Activated T-helper 2 cell treated with anti-CD3 and anti-CD28 coated beads, Interferon-gamma antibody, Interleukin-2, Interleukin-4, amounts not matched to agents 10 μg/mL and 5 μg/mL and 100 μg/mL, durations not matched to agents 14 hours and 24 hours and 36 hours (primary cell): ENCODE measurements at regions of chr2 and their contacts with region 1.

Region 1: DNA sequence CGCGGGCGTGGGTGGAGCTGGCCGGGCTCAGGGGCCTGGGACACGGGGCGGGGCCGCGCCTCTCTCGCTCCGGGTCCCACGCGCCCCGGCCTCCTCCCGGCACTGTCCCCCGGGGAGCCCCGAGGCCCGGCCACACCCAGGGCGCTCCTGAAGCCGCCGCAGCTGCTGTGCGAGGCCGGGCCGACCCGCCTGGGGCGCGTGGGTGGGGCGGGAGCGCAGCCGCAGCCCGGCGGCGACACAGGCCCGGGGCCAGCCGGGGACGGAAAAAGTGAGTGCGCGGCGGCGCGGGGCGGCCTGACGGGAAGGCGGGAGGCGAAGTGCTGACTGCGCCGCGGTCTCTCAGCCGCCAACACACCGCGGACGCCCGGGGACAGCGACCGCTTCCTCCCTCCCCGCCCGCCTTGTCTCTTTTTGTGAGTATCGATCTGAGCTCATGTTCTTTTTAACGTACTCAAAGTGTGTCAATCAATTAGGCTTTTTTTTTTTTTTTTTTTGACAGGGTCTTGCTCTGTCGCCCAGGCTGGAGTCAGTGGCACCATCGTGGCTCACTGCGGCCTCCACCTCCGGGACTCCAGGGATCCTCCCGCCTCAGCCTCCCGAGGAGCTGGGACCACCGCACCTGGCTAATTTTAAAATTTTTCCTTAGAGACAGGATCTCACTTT is 14.5 kb downstream of the PDCD1 start:
- DNase-seq: peak; percentile 85
- H3K4me3 Mint-ChIP-seq: peak overlapping the region; percentile 72
- H3K27ac Mint-ChIP-seq: peak overlapping the region; percentile 88
- H3K4me1 Mint-ChIP-seq: peaks cover 31% of the 10 kb centered on the region
- H3K27me3 Mint-ChIP-seq: peaks cover 2% of the 10 kb centered on the region

Region 2: GRCh38 chr2:241803387-241804325 is 40.5 kb before region 1 on chr2:
- intact Hi-C with region 1: loop called (anchors 5 kb)
- DNase-seq: peak; percentile 46
- H3K4me3 Mint-ChIP-seq: peak overlapping the region; percentile 66
- H3K27ac Mint-ChIP-seq: peak overlapping the region; percentile 9
- H3K4me1 Mint-ChIP-seq: peaks cover 9% of the 10 kb centered on the region
- H3K27me3 Mint-ChIP-seq: peaks cover 2% of the 10 kb centered on the region

Region 3: GRCh38 chr2:241859436-241860183 is 15.4 kb after region 1 on chr2:
- intact Hi-C with region 1: loop called (anchors 1 kb)
- DNase-seq: peak; percentile 48
- H3K4me3 Mint-ChIP-seq: peak overlapping the region; percentile 75
- H3K27ac Mint-ChIP-seq: peak overlapping the region; percentile 97
- H3K4me1 Mint-ChIP-seq: peaks cover 45% of the 10 kb centered on the region
- H3K27me3 Mint-ChIP-seq: peaks cover 4% of the 10 kb centered on the region